AG04449 (cell line): ENCODE measurements at regions of chr17 and their contacts with region 1.

Region 1: DNA sequence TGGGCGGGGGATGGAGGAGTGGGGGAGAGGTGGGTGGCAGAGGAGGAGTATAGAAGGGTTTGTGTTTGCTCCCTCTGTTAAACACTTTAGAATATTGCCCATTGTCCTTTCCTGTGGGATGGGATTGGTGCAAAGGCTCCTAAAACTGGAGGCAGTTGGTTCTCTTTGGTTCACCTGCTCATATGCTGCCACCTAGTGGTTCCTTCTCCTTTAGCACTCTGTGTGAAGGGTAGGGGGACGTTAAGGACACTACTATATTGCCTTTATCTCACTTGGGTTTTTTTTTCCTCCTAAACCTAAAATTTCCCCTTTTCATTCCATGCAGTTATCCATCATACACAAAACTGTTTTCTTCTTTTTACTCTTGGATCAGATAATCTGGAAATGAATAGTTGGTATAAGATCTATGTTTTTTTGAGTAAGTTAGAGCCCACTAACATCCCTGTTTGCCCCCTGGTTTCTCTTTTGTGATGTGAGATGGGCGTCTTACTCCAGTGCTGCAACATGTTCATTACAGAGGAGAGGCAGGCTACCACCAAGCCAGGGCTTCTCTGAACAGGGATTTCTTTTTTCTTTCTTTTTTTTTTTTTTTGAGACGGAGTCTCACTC is 23.8 kb downstream of the SNX11 start:
- DNase-seq: no peak
- H3K4me3 ChIP-seq: no peak overlapping the region
- CTCF ChIP-seq: peak; percentile 78

Region 2: DNA sequence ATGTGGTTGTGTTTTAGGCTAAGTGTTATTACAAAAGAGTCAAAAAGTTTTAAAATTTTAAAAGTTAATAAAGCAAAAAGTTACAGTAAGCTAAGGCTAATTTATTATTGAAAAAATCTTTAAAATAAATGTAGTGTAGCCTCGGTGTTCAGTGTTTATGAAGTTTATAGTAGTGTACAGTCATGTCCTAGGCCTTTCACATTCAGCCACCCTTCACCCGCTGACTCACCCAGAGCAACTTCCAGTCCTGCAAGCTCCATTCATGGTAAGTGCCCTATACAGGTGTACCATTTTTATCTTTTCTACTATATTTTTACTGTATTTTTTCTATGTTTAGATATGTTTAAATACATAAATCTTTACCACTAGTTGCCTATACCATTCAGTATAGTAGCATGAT is 1053.7 kb before region 1 on chr17:
- CTCF ChIA-PET with region 1: no interaction called
- POLR2A ChIA-PET with region 1: no interaction called
- DNase-seq: no peak
- H3K4me3 ChIP-seq: no peak overlapping the region
- CTCF ChIP-seq: no peak

Region 3: DNA sequence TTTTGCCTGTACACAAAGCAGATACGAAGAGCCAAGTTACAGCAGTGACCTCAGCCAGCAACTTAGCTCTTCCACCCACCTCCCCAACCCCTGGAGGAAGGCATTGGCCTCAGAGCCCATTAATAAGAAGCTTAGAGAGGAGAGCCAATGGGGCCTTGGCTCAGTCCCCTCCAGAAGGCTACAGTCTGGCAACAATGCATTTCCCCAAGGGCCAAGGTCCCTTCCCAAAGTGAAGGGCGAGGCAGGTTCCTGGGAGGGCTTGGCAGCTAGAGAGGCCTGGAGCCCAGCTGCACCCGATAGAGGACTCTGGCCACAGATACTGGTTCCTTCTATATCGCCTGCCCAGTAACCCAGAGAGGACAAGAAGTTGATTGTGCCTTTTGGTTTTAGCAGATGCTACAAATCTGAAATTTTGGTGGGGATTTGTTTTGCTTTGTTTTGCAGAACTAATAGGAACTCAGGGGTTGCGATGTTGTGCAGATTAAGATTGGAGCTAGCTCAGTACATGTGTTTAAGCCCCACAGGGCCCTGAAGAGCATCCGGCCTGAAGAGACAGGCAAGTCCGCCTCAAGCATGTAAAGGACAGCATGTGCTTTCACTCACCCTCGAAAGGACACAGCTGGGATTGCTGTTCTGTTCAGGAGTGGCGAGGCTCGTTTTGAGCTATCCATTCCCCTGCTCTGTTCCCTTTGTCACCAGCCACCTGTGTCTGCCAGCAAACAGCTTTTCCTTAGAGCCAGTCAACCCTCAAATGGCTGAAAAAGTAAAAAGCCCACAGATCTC is 201.9 kb before region 1 on chr17:
- CTCF ChIA-PET with region 1: no interaction called
- POLR2A ChIA-PET with region 1: no interaction called
- DNase-seq: no peak
- H3K4me3 ChIP-seq: no peak overlapping the region
- CTCF ChIP-seq: no peak

Region 4: DNA sequence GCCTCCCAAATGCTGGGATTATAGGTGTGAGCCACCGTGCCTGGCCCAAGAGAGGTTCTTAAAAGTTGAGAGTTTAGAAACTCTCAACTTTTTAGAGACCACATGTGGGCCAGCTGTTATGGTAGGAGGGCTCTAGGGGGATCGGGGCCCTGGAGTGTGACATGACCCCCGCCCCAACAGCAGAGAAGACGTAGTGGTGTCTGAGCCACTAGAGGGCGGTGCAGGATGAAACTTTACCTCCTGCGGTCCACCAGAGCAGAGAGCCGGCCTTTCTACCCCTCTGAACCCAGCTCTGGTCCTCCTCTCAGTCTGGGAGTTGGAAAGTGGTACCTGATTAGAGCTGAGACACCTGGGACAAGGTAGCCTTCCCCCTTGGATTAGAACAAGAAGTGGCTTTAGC is 153.0 kb before region 1 on chr17:
- CTCF ChIA-PET with region 1: interaction called, 10 read pairs
- POLR2A ChIA-PET with region 1: no interaction called
- DNase-seq: no peak
- H3K4me3 ChIP-seq: no peak overlapping the region
- CTCF ChIP-seq: peak; percentile 74

Region 5: GRCh38 chr17:48084932-48085444 is 46.3 kb before region 1 on chr17:
- CTCF ChIA-PET with region 1: interaction called, 60 read pairs
- POLR2A ChIA-PET with region 1: no interaction called
- DNase-seq: no peak
- H3K4me3 ChIP-seq: no peak overlapping the region
- CTCF ChIP-seq: no peak

Region 6: GRCh38 chr17:48107168-48108132 is 23.9 kb before region 1 on chr17 and contains the start of gene SNX11:
- CTCF ChIA-PET with region 1: interaction called, 13 read pairs
- POLR2A ChIA-PET with region 1: no interaction called
- DNase-seq: peak; percentile 24
- H3K4me3 ChIP-seq: peak within 1 kb of the TSS; percentile 97
- CTCF ChIP-seq: no peak

Region 7: DNA sequence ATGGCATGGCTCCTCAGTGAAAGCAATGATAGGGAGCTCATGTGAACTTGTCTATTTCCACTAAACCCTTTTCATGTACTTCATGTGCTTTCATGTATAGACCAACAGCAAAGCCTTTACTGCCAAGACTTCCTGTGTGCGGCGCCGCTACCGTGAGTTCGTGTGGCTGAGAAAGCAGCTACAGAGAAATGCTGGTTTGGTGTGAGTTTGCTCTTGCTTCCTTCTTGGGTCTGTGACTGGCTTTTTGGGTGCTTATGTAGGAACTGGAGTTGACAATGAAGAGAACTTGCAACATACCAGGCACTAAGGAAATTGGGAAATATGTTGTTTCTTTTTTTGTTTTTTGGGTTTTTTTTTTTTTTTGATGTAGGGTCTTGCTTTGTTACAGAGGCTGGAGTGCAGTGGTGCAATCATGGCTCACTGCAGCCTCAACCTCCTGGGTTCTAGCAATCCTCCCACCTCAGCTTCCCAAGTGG is 18.1 kb before region 1 on chr17:
- CTCF ChIA-PET with region 1: interaction called, 13 read pairs
- POLR2A ChIA-PET with region 1: no interaction called
- DNase-seq: no peak
- H3K4me3 ChIP-seq: no peak overlapping the region
- CTCF ChIP-seq: no peak

Region 8: DNA sequence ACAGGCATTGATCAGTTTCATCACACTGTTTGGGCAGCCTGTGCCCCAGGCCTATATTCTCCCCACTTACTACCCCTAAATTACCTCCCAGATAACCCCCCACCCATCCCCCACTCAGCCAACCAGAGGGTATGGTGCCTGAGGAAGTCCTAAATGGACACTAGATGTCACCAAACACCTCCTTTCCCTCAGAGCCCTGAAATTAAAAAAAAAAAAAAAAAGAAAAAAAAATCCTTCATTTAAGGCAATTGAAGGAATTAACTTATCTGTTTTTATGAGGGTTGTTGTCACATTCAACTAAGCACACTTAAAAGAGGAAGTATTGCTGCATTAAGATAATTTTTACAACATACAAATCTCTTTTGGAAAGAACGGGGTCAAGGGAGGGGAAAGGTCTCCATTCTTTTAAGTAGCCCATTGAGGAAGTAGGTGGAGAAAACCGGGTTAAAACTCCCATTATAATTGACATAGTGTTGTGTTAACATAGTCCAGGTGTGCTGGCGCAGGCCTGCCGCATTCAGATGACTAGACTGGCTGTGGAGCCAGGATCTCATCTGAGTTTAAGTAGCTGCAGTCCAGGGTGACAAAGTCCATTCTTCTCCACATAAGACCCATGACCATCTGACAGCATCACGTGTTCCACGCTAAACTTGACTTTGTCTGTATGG is 22.5 kb after region 1 on chr17:
- CTCF ChIA-PET with region 1: interaction called, 88 read pairs
- POLR2A ChIA-PET with region 1: no interaction called
- DNase-seq: no peak
- H3K4me3 ChIP-seq: no peak overlapping the region
- CTCF ChIP-seq: peak; percentile 44